ENCODE measurements at regions of chr6 and their contacts with region 1.

Region 1: GRCh38 chr6:117515326-117515725 is 32.9 kb downstream of the DCBLD1 start:
- DNase-seq: peak; percentile 82
- ATAC-seq: peak; percentile 82
- H3K4me3 ChIP-seq: no peak overlapping the region
- H3K27ac ChIP-seq: no peak overlapping the region
- H3K4me1 ChIP-seq: peaks cover 66% of the 10 kb centered on the region
- H3K27me3 ChIP-seq: no peaks in the 10 kb centered on the region
- CTCF ChIP-seq: no peak
- EP300 ChIP-seq: peak in 1 of 2 experiments; percentile 67; a peak in 2 of 4 replicates
- POLR2A ChIP-seq: no peak
- RAD21 ChIP-seq: no peak

Region 2: DNA sequence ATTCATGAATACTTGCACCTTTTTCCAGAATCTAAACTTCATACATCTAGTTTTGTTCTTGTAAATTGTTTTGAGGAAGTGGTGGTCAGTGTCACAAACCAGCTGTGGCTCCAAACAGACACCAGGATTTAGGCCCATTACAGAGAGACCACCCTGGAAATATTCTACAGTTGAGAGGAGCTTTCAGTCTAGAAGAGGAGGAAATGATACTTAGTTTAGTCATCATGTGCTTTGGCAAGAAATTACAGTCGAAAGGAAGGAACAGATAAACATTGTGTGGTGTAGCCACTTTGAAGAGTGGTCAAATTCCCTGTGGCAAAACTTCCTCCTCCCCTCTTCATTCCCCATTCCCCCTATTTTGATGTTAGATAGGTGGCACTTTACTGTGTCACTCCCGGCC is 17.2 kb before region 1 on chr6:
- CTCF ChIA-PET with region 1: no interaction called
- POLR2A ChIA-PET with region 1: no interaction called
- in situ Hi-C with region 1: no loop called
- intact Hi-C with region 1: no loop called
- DNase-seq: no peak
- ATAC-seq: no peak
- H3K4me3 ChIP-seq: no peak overlapping the region
- H3K27ac ChIP-seq: no peak overlapping the region
- H3K4me1 ChIP-seq: peaks cover 69% of the 10 kb centered on the region
- H3K27me3 ChIP-seq: no peaks in the 10 kb centered on the region
- CTCF ChIP-seq: no peak
- EP300 ChIP-seq: no peak
- POLR2A ChIP-seq: no peak
- RAD21 ChIP-seq: no peak

Region 3: DNA sequence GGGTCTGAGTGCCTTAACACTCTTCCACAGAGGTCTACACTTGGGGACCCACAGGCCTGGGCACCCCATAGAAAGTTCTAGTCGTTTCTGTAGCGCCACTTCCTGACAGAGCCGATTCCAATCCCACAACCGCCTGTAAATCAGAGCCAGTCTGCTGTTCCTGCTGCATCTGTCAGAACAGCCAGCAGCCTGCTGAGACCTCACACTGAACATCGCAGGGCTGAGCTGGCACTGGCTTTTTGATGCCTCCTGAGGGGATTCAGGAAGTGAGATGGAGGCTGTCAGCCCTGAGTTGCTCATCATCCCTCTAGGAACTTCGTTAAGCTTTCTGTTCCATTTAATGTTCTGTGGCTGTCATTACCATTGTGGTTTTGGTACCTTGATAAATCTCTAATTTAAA is 16.0 kb after region 1 on chr6:
- CTCF ChIA-PET with region 1: no interaction called
- POLR2A ChIA-PET with region 1: no interaction called
- in situ Hi-C with region 1: no loop called
- intact Hi-C with region 1: no loop called
- DNase-seq: no peak
- ATAC-seq: no peak
- H3K4me3 ChIP-seq: no peak overlapping the region
- H3K27ac ChIP-seq: no peak overlapping the region
- H3K4me1 ChIP-seq: no peaks in the 10 kb centered on the region
- H3K27me3 ChIP-seq: no peaks in the 10 kb centered on the region
- CTCF ChIP-seq: no peak
- EP300 ChIP-seq: no peak
- POLR2A ChIP-seq: no peak
- RAD21 ChIP-seq: no peak

Region 4: DNA sequence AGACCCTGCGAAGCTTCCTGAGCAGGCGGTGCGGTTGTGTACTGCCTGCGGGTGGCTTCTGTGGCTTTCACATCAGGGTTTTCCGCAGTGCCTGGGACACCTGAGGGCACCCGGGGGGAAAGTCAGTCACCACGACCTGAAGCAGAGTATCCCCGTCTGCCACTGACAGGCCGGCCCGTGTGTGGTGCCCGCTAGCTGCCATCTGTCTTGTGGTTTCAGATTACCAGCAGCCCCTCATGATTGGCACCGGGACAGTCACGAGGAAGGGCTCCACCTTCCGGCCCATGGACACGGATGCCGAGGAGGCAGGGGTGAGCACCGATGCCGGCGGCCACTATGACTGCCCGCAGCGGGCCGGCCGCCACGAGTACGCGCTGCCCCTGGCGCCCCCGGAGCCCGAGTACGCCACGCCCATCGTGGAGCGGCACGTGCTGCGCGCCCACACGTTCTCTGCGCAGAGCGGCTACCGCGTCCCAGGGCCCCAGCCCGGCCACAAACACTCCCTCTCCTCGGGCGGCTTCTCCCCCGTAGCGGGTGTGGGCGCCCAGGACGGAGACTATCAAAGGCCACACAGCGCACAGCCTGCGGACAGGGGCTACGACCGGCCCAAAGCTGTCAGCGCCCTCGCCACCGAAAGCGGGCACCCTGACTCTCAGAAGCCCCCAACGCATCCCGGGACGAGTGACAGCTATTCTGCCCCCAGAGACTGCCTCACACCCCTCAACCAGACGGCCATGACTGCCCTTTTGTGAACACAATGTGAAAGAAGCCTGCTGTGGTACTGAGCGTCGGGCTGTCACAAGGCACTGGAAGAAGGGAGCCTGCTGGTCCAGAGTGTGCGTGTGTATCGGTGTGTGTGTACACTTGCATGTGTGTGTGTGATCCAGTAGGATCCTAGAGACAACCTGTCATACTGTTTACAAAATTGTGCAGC is 32.6 kb after region 1 on chr6:
- CTCF ChIA-PET with region 1: no interaction called
- POLR2A ChIA-PET with region 1: no interaction called
- in situ Hi-C with region 1: no loop called
- intact Hi-C with region 1: loop called (anchors 2 kb)
- DNase-seq: no peak
- ATAC-seq: no peak
- H3K4me3 ChIP-seq: no peak overlapping the region
- H3K27ac ChIP-seq: peak overlapping the region; percentile 40
- H3K4me1 ChIP-seq: peaks cover 31% of the 10 kb centered on the region
- H3K27me3 ChIP-seq: no peaks in the 10 kb centered on the region
- CTCF ChIP-seq: no peak
- EP300 ChIP-seq: no peak
- POLR2A ChIP-seq: no peak
- RAD21 ChIP-seq: no peak

Region 5: GRCh38 chr6:117739869-117740268 is 224.5 kb after region 1 on chr6:
- CTCF ChIA-PET with region 1: no interaction called
- POLR2A ChIA-PET with region 1: no interaction called
- in situ Hi-C with region 1: no loop called
- intact Hi-C with region 1: no loop called
- DNase-seq: no peak
- ATAC-seq: no peak
- H3K4me3 ChIP-seq: no peak overlapping the region
- H3K27ac ChIP-seq: no peak overlapping the region
- H3K4me1 ChIP-seq: no peaks in the 10 kb centered on the region
- H3K27me3 ChIP-seq: no peaks in the 10 kb centered on the region
- CTCF ChIP-seq: no peak
- EP300 ChIP-seq: no peak
- POLR2A ChIP-seq: no peak
- RAD21 ChIP-seq: no peak

Region 6: DNA sequence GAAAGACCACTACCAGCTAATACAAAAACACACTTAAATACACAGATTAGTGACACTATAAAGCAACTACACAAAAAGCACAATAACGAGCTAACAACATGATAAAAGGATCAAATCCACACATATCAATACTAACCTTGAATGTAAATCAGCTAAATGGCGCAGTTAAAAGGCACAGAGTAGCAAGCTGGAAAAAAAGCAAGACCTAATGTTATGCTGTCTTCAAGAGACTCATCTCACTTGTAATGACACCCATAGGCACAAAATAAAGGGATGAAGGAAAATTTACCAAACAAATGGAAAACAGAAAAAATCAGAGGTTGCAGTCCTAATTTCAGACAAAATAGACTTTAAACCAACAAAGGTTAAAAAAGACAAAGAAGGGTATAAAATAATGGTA is 246.3 kb after region 1 on chr6:
- CTCF ChIA-PET with region 1: no interaction called
- POLR2A ChIA-PET with region 1: no interaction called
- in situ Hi-C with region 1: no loop called
- intact Hi-C with region 1: no loop called
- DNase-seq: no peak
- ATAC-seq: no peak
- H3K4me3 ChIP-seq: no peak overlapping the region
- H3K27ac ChIP-seq: no peak overlapping the region
- H3K4me1 ChIP-seq: no peaks in the 10 kb centered on the region
- H3K27me3 ChIP-seq: no peaks in the 10 kb centered on the region
- CTCF ChIP-seq: no peak
- EP300 ChIP-seq: no peak
- POLR2A ChIP-seq: no peak
- RAD21 ChIP-seq: no peak